ENCODE measurements at regions of chr1 and their contacts with region 1.

Region 1: DNA sequence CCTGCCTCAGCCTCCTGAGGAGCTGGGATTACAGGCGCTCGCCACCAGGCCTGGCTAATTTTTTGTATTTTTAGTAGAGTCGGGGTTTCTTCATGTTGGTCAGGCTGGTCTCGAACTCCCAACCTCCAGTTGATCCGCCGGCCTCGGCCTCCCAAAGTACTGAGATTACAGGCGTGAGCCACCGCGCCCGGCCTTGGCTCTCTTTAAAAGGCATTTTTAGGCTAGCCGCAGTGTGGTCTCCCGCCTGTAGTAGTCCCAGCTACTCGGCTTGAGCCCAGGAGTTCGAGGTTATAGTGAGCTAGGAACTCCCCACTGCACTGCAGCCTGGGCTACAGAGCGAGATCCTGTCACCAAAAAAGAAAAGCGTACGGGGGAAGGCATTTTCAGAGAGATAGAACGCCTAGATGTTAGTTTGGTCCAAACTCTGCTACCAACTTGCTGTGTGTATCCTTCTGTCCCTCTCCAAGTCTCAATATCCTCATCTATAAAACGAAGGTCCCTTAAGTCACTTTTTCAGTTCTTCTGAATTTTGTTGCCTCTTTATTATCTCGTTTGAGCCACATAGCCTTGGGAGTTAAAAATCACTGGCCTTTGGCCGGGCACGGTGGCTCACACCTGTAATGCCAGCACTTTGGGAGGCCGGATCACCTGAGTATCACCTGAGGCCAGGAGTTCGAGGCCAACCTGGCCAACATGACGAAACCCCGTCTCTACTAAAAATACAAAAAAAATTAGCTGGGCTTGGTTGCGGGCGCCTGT is 734 bp downstream of the MED18 start:
- DNase-seq: peak; percentile 50
- ATAC-seq: peak; percentile 11
- H3K4me3 Mint-ChIP-seq: peak overlapping the region; percentile 92
- H3K27ac Mint-ChIP-seq: peak overlapping the region; percentile 97
- H3K4me1 Mint-ChIP-seq: peaks cover 49% of the 10 kb centered on the region
- H3K27me3 Mint-ChIP-seq: peaks cover 2% of the 10 kb centered on the region
- CTCF ChIP-seq: no peak

Region 2: GRCh38 chr1:27316860-27317259 is 1012.7 kb before region 1 on chr1:
- CTCF ChIA-PET with region 1: no interaction called
- POLR2A ChIA-PET with region 1: interaction called, 13 read pairs
- intact Hi-C with region 1: no loop called
- DNase-seq: no peak
- ATAC-seq: no peak
- H3K4me3 Mint-ChIP-seq: no peak overlapping the region
- H3K27ac Mint-ChIP-seq: no peak overlapping the region
- H3K4me1 Mint-ChIP-seq: peaks cover 8% of the 10 kb centered on the region
- H3K27me3 Mint-ChIP-seq: no peaks in the 10 kb centered on the region
- CTCF ChIP-seq: no peak

Region 3: GRCh38 chr1:28229996-28230395 is 99.6 kb before region 1 on chr1:
- CTCF ChIA-PET with region 1: interaction called, 3 read pairs
- POLR2A ChIA-PET with region 1: interaction called, 30 read pairs
- intact Hi-C with region 1: loop called (anchors 1 kb)
- DNase-seq: no peak
- ATAC-seq: no peak
- H3K4me3 Mint-ChIP-seq: no peak overlapping the region
- H3K27ac Mint-ChIP-seq: no peak overlapping the region
- H3K4me1 Mint-ChIP-seq: peaks cover 34% of the 10 kb centered on the region
- H3K27me3 Mint-ChIP-seq: no peaks in the 10 kb centered on the region
- CTCF ChIP-seq: no peak

Region 4: GRCh38 chr1:28341591-28341990 is 12.0 kb after region 1 on chr1:
- CTCF ChIA-PET with region 1: no interaction called
- POLR2A ChIA-PET with region 1: interaction called, 16 read pairs
- intact Hi-C with region 1: no loop called
- DNase-seq: no peak
- ATAC-seq: no peak
- H3K4me3 Mint-ChIP-seq: no peak overlapping the region
- H3K27ac Mint-ChIP-seq: no peak overlapping the region
- H3K4me1 Mint-ChIP-seq: no peaks in the 10 kb centered on the region
- H3K27me3 Mint-ChIP-seq: no peaks in the 10 kb centered on the region
- CTCF ChIP-seq: no peak

Region 5: GRCh38 chr1:28552758-28553663 is 223.4 kb after region 1 on chr1 and contains the start of gene TRNAU1AP:
- CTCF ChIA-PET with region 1: no interaction called
- POLR2A ChIA-PET with region 1: interaction called, 5 read pairs
- intact Hi-C with region 1: loop called (anchors 1 kb)
- DNase-seq: peak; percentile 94
- ATAC-seq: peak; percentile 93
- H3K4me3 Mint-ChIP-seq: peak within 1 kb of the TSS; percentile 99
- H3K27ac Mint-ChIP-seq: peak within 1 kb of the TSS; percentile 98
- H3K4me1 Mint-ChIP-seq: peaks cover 26% of the 10 kb centered on the region
- H3K27me3 Mint-ChIP-seq: no peaks in the 10 kb centered on the region
- CTCF ChIP-seq: no peak
- total RNA-seq, gene TRNAU1AP: 36.9 and 42.0 TPM in 2 replicates

Region 6: GRCh38 chr1:28668191-28668955 is 338.8 kb after region 1 on chr1 and contains the start of gene GMEB1:
- CTCF ChIA-PET with region 1: no interaction called
- POLR2A ChIA-PET with region 1: interaction called, 19 read pairs
- intact Hi-C with region 1: no loop called
- DNase-seq: peak; percentile 73
- ATAC-seq: peak; percentile 65
- H3K4me3 Mint-ChIP-seq: peak within 1 kb of the TSS; percentile 92
- H3K27ac Mint-ChIP-seq: peak within 1 kb of the TSS; percentile 97
- H3K4me1 Mint-ChIP-seq: peaks cover 17% of the 10 kb centered on the region
- H3K27me3 Mint-ChIP-seq: no peaks in the 10 kb centered on the region
- CTCF ChIP-seq: no peak
- total RNA-seq, gene GMEB1: 26.8 and 27.4 TPM in 2 replicates

Region 7: DNA sequence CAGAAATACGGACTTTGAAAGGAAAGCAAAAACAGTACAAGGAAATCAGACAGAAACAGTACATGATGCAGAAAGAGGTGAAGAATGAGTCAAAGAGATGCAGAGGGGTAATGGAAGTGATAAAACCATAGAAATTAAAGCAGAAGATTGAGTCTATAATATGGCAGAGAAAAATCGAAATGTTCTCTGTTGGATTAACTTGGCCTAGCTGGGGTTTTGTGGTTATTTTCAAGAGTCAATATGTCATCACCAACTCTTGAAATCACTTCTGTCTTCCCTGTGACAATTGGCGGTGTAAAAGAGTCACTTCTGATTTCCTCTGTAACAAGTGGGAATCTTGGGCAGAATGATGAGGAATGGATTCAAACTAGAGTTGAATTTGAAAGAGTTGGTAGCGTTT is 414.6 kb after region 1 on chr1:
- CTCF ChIA-PET with region 1: no interaction called
- POLR2A ChIA-PET with region 1: no interaction called
- intact Hi-C with region 1: no loop called
- DNase-seq: no peak
- ATAC-seq: no peak
- H3K4me3 Mint-ChIP-seq: peak overlapping the region; percentile 35
- H3K27ac Mint-ChIP-seq: no peak overlapping the region
- H3K4me1 Mint-ChIP-seq: peaks cover 56% of the 10 kb centered on the region
- H3K27me3 Mint-ChIP-seq: no peaks in the 10 kb centered on the region
- CTCF ChIP-seq: no peak